Activated CD4-positive, alpha-beta T cell treated with anti-CD3 and anti-CD28 coated beads for 36 hours (primary cell): ENCODE measurements at regions of chr12 and their contacts with region 1.

Region 1: GRCh38 chr12:122356192-122356635 is 66.3 kb downstream of the CLIP1 start:
- DNase-seq: peak; percentile 73
- ATAC-seq: peak; percentile 95
- H3K4me3 Mint-ChIP-seq: no peak overlapping the region
- H3K27ac Mint-ChIP-seq: no peak overlapping the region
- H3K4me1 Mint-ChIP-seq: peaks cover 13% of the 10 kb centered on the region
- H3K27me3 Mint-ChIP-seq: no peaks in the 10 kb centered on the region

Region 2: GRCh38 chr12:122024123-122024785 is 332.0 kb before region 1 on chr12:
- CTCF ChIA-PET with region 1: no interaction called
- POLR2A ChIA-PET with region 1: no interaction called
- intact Hi-C with region 1: no loop called
- DNase-seq: no peak
- ATAC-seq: no peak
- H3K4me3 Mint-ChIP-seq: no peak overlapping the region
- H3K27ac Mint-ChIP-seq: no peak overlapping the region
- H3K4me1 Mint-ChIP-seq: peaks cover 11% of the 10 kb centered on the region
- H3K27me3 Mint-ChIP-seq: peaks cover 13% of the 10 kb centered on the region

Region 3: DNA sequence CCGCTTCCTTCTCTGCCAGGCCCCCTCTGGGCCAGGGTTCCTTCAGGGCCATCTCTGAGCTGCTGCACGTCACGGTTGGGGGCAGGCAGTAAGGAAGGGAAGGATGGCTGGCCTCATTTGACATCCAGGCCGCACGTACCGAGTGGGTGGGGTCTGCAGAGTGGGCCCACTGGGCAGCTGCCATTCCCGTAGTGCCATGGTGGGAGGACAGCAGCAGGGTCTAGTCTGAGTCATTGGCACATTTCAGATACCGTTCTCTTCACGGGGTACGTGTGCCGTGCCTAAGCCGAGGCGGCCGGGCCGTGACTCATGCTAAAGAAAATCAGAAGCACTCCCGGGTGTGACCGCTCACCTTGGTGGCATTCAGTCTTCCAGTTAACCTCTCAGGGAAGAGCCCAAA is 226.1 kb before region 1 on chr12:
- CTCF ChIA-PET with region 1: interaction called, 3 read pairs
- POLR2A ChIA-PET with region 1: no interaction called
- intact Hi-C with region 1: loop called in 1 of 2 experiments (anchors 2 kb)
- DNase-seq: no peak
- ATAC-seq: no peak
- H3K4me3 Mint-ChIP-seq: no peak overlapping the region
- H3K27ac Mint-ChIP-seq: no peak overlapping the region
- H3K4me1 Mint-ChIP-seq: peaks cover 5% of the 10 kb centered on the region
- H3K27me3 Mint-ChIP-seq: no peaks in the 10 kb centered on the region

Region 4: DNA sequence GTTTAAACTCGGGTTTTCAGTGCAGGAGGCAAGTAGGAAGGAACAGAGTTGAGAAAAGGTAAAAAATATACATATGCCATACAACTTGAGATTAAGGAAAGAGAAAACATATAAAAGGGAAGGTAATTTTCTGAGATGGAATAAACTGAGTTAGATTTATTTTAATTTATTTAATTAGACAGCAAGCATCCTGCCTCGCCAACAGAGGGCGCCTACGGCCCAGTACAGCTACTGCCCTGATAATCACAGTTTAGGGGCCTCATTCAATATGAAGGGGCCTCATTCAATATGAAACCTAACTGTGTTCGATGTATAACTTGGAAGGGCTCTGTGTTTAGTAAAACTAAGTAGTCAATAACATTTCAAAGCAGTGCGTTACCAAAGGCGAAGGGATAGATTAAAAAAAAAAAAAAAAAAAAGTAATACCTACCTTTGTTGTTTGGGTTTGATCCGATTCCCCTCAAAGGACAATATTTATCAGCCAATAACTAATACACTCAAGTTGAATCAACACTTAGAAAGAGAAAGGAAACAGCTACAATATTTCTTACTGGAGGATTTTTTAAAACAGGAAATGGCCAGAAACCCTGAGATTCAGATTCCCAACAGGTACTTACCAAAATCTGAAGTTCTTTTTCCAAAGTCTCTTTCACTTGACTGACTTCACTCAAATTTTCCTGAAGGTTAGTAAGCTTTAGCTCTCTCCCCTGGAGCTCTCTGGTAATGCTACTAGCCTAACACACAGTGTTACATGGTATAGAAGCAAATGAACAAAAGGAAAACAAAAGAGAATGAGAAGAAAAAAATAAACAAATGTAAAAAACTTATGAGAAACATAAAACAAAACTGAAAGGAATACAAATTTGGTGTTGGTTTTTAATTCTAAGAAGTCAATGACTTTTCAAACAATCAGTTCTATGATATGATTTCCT is 19.9 kb before region 1 on chr12:
- CTCF ChIA-PET with region 1: interaction called, 26 read pairs
- POLR2A ChIA-PET with region 1: no interaction called
- intact Hi-C with region 1: no loop called
- DNase-seq: peak; percentile 76
- ATAC-seq: no peak
- H3K4me3 Mint-ChIP-seq: no peak overlapping the region
- H3K27ac Mint-ChIP-seq: peak overlapping the region; percentile 73
- H3K4me1 Mint-ChIP-seq: peaks cover 12% of the 10 kb centered on the region
- H3K27me3 Mint-ChIP-seq: no peaks in the 10 kb centered on the region

Region 5: DNA sequence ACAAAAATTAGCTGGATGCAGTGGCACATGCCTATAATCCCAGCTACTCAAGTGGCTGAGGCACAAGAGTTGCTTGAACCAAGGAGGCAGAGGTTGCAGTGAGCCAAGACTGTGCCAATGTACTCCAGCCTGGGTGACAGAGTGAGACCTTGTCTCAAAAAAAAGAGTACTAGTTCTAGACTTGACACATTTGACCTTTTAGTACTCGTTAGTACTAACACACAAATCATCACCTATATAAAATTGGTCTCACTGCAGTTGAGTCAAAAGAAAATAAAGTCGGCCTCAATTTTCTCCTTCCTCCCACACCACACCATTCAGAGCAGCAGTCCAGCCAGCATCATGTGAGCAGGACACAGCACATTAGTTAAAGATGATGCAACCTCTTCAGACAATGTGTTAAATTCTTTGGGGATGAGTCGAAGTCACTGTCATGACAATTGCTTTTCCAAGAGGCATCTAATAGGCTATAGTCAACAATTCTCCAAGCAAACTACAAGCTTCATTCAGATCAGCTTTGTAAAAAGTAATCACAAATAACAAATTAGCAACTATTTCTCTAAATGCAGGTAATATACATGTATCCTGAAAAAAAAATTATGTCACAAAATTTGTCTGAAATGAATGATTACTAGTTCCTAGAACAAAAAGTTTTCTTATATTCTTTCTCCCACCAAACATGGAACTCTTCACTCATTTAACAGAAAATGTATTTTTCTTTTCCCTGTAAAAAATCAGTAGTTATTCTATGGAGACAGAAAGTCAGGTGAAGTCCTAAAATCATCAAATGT is 10.7 kb after region 1 on chr12:
- CTCF ChIA-PET with region 1: interaction called, 30 read pairs
- POLR2A ChIA-PET with region 1: no interaction called
- intact Hi-C with region 1: no loop called
- DNase-seq: peak; percentile 39
- ATAC-seq: peak; percentile 89
- H3K4me3 Mint-ChIP-seq: no peak overlapping the region
- H3K27ac Mint-ChIP-seq: peak overlapping the region; percentile 86
- H3K4me1 Mint-ChIP-seq: peaks cover 22% of the 10 kb centered on the region
- H3K27me3 Mint-ChIP-seq: no peaks in the 10 kb centered on the region

Region 6: DNA sequence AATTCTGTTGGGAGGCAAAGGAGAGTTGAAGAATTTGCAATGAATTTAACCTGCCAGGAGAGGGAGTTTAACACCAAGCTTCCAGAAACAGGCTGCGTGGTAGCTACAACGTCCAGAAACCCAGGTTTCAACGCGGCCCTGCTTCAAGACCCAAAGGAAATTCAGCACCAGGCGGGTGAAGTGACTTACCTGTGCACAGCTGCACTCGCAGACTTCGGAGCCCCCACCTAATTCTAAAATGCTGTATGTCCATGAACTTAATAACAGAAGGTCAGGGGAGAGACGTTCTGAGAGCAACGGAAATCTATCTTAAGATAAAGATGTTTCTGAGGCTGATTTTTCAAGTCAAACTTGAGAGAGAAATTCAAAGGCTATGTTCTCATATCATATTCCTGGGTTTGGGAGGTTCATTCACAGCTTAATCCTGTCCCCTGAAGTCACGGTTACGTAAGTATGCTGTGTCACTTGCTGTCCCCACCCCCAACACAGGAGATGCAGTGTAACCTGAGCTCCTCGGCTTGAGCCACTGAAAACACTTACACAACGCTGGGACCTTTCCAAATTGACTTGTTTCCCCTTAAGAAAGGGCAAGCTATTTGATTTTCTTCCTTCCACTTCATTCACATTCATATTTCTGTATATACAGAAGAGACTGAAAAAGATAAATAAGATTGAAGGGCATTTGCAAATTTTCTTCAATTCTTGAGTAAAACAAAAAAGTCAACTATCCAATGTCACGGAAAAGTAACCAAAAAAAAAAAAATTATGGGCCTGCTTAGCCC is 43.6 kb after region 1 on chr12:
- CTCF ChIA-PET with region 1: interaction called, 13 read pairs
- POLR2A ChIA-PET with region 1: no interaction called
- intact Hi-C with region 1: no loop called
- DNase-seq: peak; percentile 73
- ATAC-seq: peak; percentile 37
- H3K4me3 Mint-ChIP-seq: peak overlapping the region; percentile 43
- H3K27ac Mint-ChIP-seq: peak overlapping the region; percentile 86
- H3K4me1 Mint-ChIP-seq: peaks cover 50% of the 10 kb centered on the region
- H3K27me3 Mint-ChIP-seq: no peaks in the 10 kb centered on the region

Region 7: GRCh38 chr12:122459211-122459610 is 103.0 kb after region 1 on chr12:
- CTCF ChIA-PET with region 1: no interaction called
- POLR2A ChIA-PET with region 1: no interaction called
- intact Hi-C with region 1: no loop called
- DNase-seq: no peak
- ATAC-seq: no peak
- H3K4me3 Mint-ChIP-seq: no peak overlapping the region
- H3K27ac Mint-ChIP-seq: no peak overlapping the region
- H3K4me1 Mint-ChIP-seq: peaks cover 5% of the 10 kb centered on the region
- H3K27me3 Mint-ChIP-seq: no peaks in the 10 kb centered on the region